Colonic mucosa (tissue), 4 donors: ENCODE measurements at regions of chr3 and their contacts with region 1.

Region 1: DNA sequence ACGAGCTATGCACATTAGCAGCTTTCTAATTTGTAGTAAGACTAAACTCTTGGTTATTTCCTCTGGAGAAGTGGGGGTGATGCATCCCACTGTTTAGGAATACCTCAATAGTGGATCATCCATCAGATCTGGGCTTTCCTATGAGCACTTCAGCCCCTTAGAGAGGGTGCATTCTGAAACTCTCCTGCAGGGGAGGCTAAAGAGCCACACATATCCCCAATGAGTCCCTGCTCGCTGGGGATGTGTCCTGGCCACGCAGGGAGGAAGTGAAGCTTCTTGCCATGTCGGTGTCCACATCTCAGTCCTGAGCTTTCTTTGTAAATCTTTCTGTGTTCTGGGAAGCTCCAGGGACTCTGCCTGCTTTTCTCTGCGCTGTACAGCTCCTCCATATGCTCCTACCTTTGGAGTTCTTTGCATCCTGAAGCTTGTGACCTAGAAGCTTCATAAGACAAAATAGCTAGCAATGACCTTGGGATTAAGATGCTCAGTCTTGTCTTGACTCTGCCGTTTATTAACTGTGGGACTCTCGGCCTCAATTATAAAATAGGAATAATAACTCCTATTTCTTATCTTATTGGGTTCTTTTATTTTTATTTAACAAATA is 28.3 kb upstream of the MASP1 start:
- DNase-seq: peak; percentile 71
- H3K4me3 ChIP-seq: no peak overlapping the region
- H3K27ac ChIP-seq: no peak overlapping the region
- H3K4me1 ChIP-seq: no peaks in the 10 kb centered on the region
- H3K27me3 ChIP-seq: no peaks in the 10 kb centered on the region
- CTCF ChIP-seq: peak; percentile 86

Region 2: DNA sequence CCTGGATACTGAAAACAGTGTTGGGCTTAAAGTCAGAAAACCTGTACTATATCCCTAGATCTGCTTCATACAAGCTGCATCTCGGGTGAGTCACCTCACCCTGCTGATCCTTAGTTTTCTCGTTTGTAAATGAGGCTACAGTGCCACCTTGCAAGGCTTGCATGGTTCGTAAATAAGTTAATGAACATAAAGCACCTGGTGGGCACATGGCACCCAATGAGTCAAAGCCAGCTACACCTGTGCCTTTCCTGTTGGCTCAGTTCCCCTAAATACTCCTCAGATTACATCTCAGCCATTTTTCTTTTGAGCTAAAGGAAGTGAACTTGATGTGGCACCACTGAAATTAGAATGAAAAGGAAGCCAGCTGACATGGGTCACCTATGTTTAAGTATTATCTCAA is 96.0 kb before region 1 on chr3:
- intact Hi-C with region 1: loop called (anchors 5 kb)
- DNase-seq: no peak
- H3K4me3 ChIP-seq: no peak overlapping the region
- H3K27ac ChIP-seq: no peak overlapping the region
- H3K4me1 ChIP-seq: no peaks in the 10 kb centered on the region
- H3K27me3 ChIP-seq: no peaks in the 10 kb centered on the region
- CTCF ChIP-seq: no peak

Region 3: GRCh38 chr3:187623285-187623814 is 303.5 kb after region 1 on chr3:
- intact Hi-C with region 1: loop called (anchors 5 kb)
- DNase-seq: no peak
- H3K4me3 ChIP-seq: no peak overlapping the region
- H3K27ac ChIP-seq: no peak overlapping the region
- H3K4me1 ChIP-seq: no peaks in the 10 kb centered on the region
- H3K27me3 ChIP-seq: no peaks in the 10 kb centered on the region
- CTCF ChIP-seq: no peak

Region 4: DNA sequence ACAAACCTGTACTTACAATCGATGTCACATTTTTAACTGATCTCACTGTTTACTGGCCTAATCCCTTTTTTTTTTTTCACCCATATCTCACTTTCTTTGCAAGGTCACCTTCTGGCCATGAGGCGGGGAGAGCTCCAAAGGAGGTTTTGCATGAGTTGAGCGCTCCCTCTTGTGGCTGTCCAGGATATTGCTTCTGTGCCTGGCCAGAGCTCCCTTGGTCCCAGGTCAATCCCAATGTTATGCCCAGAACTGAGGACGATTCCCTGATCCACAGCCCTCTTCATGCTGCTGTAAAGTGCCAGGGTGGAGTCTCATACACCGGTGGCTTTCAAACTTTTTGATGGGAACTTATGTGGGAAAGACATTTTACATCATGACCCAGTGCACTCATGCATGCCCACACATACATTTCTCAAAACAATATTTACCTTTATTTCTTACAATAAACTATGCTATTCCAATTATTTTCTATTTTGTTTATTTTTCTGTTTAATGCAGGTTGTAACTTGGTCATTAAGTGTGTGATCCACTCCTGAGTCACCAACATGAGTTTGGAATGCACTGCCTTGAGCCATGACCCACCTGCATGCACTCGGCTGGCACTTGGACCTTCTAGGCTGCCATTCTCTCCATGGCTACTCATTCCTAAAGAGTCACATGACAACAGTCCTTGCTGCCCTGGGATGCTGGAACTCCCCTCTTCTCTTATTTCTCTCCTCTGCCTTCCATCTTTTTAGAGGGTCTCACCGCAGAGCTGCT is 360.0 kb after region 1 on chr3:
- intact Hi-C with region 1: loop called (anchors 1 kb)
- DNase-seq: peak; percentile 78
- H3K4me3 ChIP-seq: no peak overlapping the region
- H3K27ac ChIP-seq: no peak overlapping the region
- H3K4me1 ChIP-seq: no peaks in the 10 kb centered on the region
- H3K27me3 ChIP-seq: no peaks in the 10 kb centered on the region
- CTCF ChIP-seq: peak; percentile 91

Region 5: DNA sequence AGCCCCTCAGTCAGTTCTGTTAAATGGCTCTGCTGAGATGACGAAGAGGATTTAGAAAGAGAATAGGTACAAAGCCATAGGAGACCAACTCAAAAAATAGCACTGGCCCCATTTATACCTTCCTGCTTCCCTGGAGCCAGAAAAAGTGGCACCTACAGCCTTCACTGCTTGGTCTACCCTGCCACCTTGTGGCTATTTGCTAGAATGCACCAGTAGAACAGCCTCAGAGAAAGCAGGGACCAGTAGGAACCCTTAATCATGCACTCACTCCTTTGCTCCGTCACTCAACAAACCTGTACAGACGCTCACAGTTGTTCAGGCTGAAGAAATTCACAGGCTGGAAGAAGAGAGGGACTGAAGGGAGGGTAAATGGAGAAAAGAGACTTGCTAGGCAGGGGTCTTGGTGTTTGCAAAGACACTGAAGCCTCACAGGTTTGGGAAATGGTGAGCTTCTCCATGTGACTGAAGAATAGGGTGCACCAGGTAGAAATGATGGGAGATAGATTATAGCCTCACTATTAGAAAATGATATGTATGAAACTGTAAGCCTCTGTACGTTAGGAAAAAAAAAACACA is 394.7 kb after region 1 on chr3:
- intact Hi-C with region 1: loop called (anchors 10 kb)
- DNase-seq: peak; percentile 76
- H3K4me3 ChIP-seq: no peak overlapping the region
- H3K27ac ChIP-seq: no peak overlapping the region
- H3K4me1 ChIP-seq: no peaks in the 10 kb centered on the region
- H3K27me3 ChIP-seq: no peaks in the 10 kb centered on the region
- CTCF ChIP-seq: peak; percentile 91